ENCODE measurements at regions of chr6 and their contacts with region 1.

Region 1: DNA sequence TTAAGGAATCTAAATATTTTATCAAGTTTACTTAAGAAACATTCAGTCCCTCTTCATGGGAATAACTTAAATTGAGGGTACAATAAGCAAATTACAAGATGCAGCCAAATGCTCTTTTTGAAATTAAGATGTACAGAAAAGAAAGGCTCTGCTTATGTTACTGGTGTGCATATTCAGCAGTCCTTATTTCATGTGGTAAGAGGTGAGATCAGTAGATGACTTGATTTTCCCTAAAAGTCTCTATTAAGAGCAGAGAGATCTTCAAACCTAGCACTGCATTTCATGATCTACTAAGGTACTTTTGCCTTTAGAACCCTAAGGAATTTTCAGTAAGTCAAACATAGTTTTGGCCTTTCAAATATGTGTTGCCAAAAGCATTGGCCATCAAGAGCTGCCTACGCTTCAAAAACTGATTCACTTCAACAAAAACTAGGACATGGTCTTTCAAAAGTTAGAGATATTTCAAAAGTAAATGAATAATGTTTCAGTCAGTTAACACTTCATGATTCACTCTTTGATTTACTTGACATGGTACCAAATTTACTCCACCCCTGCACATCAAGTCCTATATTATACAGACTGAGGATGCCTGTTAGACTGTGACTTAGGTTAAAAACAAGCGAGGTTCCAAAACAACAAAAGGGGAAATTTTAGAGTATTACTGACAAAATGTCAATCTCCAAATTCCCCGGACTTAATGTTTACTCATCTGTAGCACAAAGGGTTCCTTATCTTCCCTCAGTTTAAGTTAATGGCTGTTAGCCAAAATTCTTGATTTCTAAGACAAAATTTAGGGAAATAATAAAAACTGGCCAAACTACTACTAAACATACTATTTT is 19.2 kb downstream of the C6orf62 start:
- DNase-seq: no peak
- H3K4me3 ChIP-seq: no peak overlapping the region
- H3K27ac ChIP-seq: peak overlapping the region in 1 of 4 donors; percentile 34
- H3K4me1 ChIP-seq: peaks cover 0 to 5% (median 0%) of the 10 kb centered on the region in 3 donors
- H3K27me3 ChIP-seq: no peaks in the 10 kb centered on the region
- CTCF ChIP-seq: no peak
- POLR2A ChIP-seq: no peak

Region 2: GRCh38 chr6:24581084-24581669 is 118.6 kb before region 1 on chr6:
- intact Hi-C with region 1: loop called (anchors 5 kb)
- DNase-seq: no peak
- H3K4me3 ChIP-seq: no peak overlapping the region
- H3K27ac ChIP-seq: no peak overlapping the region
- H3K4me1 ChIP-seq: peaks cover 0 to 10% (median 3%) of the 10 kb centered on the region in 3 donors
- H3K27me3 ChIP-seq: no peaks in the 10 kb centered on the region
- CTCF ChIP-seq: peak; percentile 58 to 84 (median 72)
- POLR2A ChIP-seq: no peak

Region 3: GRCh38 chr6:24940311-24940917 is 240.7 kb after region 1 on chr6:
- intact Hi-C with region 1: no loop called
- DNase-seq: no peak
- H3K4me3 ChIP-seq: no peak overlapping the region
- H3K27ac ChIP-seq: no peak overlapping the region
- H3K4me1 ChIP-seq: peaks cover 0 to 7% (median 0%) of the 10 kb centered on the region in 3 donors
- H3K27me3 ChIP-seq: no peaks in the 10 kb centered on the region
- CTCF ChIP-seq: no peak
- POLR2A ChIP-seq: no peak

Measured in esophagus squamous epithelium (tissue), 5 donors.